ENCODE measurements at regions of chr2 and their contacts with region 1.

Region 1: GRCh38 chr2:30165050-30165520 is 18.3 kb downstream of the YPEL5 start:
- DNase-seq: peak; percentile 86 to 87
- H3K4me3 ChIP-seq: no peak overlapping the region
- H3K4me3 Mint-ChIP-seq: no peak overlapping the region
- H3K27ac Mint-ChIP-seq: no peak overlapping the region
- H3K4me1 ChIP-seq: peaks cover 3% of the 10 kb centered on the region; the same call in 1 of the 2 replicates
- H3K4me1 Mint-ChIP-seq: peaks cover 9% of the 10 kb centered on the region
- H3K27me3 ChIP-seq: no peaks in the 10 kb centered on the region
- H3K27me3 Mint-ChIP-seq: no peaks in the 10 kb centered on the region
- CTCF ChIP-seq: peak; percentile 84 to 86

Region 2: GRCh38 chr2:30208452-30208851 is 43.4 kb after region 1 on chr2:
- CTCF ChIA-PET with region 1: interaction called, 37 read pairs
- POLR2A ChIA-PET with region 1: no interaction called
- intact Hi-C with region 1: loop called (anchors 1 kb)
- DNase-seq: peak; percentile 75
- H3K4me3 ChIP-seq: no peak overlapping the region
- H3K4me3 Mint-ChIP-seq: no peak overlapping the region
- H3K27ac Mint-ChIP-seq: no peak overlapping the region
- H3K4me1 ChIP-seq: peaks cover 6% of the 10 kb centered on the region; the same call in 1 of the 2 replicates
- H3K4me1 Mint-ChIP-seq: peaks cover 22% of the 10 kb centered on the region
- H3K27me3 ChIP-seq: no peaks in the 10 kb centered on the region
- H3K27me3 Mint-ChIP-seq: no peaks in the 10 kb centered on the region
- CTCF ChIP-seq: peak; percentile 91 to 94

Region 3: DNA sequence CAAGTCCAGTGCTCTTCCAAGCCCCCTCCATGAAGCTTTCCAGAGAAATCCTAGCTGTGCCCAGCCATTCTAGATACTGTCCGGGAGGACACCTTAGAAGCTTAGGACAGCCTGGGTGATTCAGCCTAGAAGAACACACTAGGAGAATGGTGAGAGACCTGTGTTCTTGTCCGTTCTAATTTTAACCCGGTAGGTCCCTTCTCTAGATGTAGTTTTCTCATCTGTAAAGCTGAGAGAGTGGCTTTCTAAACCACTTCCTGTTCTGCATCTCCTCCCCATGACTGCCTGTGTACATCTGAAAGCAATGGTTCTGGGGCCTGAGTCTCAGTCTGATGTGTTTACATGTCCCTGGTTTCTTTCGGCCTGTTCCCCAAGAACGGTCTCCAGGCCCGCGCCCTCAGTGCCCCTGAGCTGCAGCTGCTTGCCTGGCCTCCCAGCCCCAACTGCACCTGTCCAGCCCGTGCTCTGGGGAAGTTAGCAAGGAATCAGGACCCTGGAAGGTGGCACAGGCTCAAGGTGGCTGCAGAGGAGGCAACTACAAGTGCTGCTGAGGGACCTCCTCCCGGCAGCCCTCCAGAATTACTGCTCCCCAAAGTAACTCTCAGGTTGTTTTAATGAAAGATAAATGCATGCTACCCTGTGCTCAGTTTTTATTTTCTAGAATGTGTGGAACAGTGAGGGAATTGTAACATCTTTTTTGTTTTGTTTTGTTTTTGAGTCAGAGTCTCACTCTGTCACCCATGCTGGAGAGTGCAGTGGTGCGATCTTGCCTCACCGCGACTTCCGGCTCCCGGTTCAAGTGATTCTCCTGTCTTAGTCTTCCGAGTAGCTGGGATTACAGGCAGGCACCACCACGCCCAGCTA is 172.1 kb after region 1 on chr2:
- CTCF ChIA-PET with region 1: interaction called, 4 read pairs
- POLR2A ChIA-PET with region 1: no interaction called
- intact Hi-C with region 1: loop called (anchors 10 kb)
- DNase-seq: no peak
- H3K4me3 ChIP-seq: no peak overlapping the region
- H3K4me3 Mint-ChIP-seq: no peak overlapping the region
- H3K27ac Mint-ChIP-seq: peak overlapping the region; percentile 53
- H3K4me1 ChIP-seq: peaks cover 18% of the 10 kb centered on the region; the same call in 1 of the 2 replicates
- H3K4me1 Mint-ChIP-seq: peaks cover 12% of the 10 kb centered on the region
- H3K27me3 ChIP-seq: no peaks in the 10 kb centered on the region
- H3K27me3 Mint-ChIP-seq: no peaks in the 10 kb centered on the region
- CTCF ChIP-seq: no peak

Region 4: DNA sequence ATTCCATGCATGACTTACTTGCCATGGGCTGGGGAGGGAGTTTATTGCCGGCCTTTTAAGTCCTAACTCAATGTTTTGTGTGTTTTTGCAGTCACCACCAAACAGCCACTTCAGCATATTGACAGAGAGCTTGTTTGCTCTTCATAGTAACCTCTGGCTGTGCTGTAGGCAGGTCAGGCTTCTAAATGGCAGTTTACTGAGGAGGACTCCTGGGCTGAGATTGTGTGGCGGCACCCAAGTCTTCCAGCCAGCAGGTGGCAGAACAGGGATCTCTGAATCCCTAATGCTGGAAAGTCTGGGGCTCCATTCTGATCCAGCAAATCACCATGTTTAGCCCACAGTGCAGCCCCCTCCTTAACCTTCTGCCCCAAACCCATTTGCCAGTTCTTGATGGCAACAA is 520.9 kb after region 1 on chr2:
- CTCF ChIA-PET with region 1: interaction called, 11 read pairs
- POLR2A ChIA-PET with region 1: no interaction called
- intact Hi-C with region 1: loop called (anchors 5 kb)
- DNase-seq: peak; percentile 73 to 76
- H3K4me3 ChIP-seq: no peak overlapping the region
- H3K4me3 Mint-ChIP-seq: no peak overlapping the region
- H3K27ac Mint-ChIP-seq: no peak overlapping the region
- H3K4me1 ChIP-seq: no peaks in the 10 kb centered on the region; the same call in 1 of the 2 replicates
- H3K4me1 Mint-ChIP-seq: peaks cover 7% of the 10 kb centered on the region
- H3K27me3 ChIP-seq: no peaks in the 10 kb centered on the region
- H3K27me3 Mint-ChIP-seq: no peaks in the 10 kb centered on the region
- CTCF ChIP-seq: peak; percentile 50 to 80